ENCODE measurements at regions of chr9 and their contacts with region 1.

Region 1: GRCh38 chr9:36748322-36748899 is 175.7 kb downstream of the MELK start:
- DNase-seq: peak; percentile 54
- H3K4me3 Mint-ChIP-seq: no peak overlapping the region
- H3K27ac Mint-ChIP-seq: no peak overlapping the region
- H3K4me1 Mint-ChIP-seq: no peaks in the 10 kb centered on the region
- H3K27me3 Mint-ChIP-seq: peaks cover 90% of the 10 kb centered on the region
- CTCF ChIP-seq: no peak

Region 2: DNA sequence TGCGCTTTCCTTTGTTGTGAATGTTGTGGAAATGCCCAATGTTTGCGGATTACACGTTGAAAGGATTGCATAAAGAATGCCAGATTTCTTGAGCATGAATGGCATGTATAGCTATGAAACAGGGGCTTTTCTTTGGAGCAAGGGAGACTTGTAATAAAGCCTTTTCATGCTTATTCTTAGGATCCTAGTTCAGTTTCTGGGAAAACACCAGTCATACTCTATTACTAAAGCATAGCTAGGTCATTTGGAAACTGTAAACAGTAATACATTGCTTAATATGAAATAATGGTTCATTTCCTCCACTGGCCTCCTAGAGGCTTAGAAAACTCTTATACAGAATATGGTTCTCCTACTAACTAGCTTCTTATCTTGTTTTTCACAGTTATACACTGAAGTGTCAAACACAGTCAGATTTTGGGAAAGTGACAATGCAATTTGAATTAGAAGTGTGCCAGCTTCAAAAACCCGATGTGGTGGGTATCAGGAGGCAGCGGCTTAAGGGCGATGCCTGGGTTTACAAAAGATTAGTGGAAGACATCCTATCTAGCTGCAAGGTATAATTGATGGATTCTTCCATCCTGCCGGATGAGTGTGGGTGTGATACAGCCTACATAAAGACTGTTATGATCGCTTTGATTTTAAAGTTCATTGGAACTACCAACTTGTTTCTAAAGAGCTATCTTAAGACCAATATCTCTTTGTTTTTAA is 71.5 kb before region 1 on chr9:
- CTCF ChIA-PET with region 1: no interaction called
- POLR2A ChIA-PET with region 1: no interaction called
- intact Hi-C with region 1: no loop called
- DNase-seq: no peak
- H3K4me3 Mint-ChIP-seq: no peak overlapping the region
- H3K27ac Mint-ChIP-seq: no peak overlapping the region
- H3K4me1 Mint-ChIP-seq: no peaks in the 10 kb centered on the region
- H3K27me3 Mint-ChIP-seq: no peaks in the 10 kb centered on the region
- CTCF ChIP-seq: no peak

Region 3: DNA sequence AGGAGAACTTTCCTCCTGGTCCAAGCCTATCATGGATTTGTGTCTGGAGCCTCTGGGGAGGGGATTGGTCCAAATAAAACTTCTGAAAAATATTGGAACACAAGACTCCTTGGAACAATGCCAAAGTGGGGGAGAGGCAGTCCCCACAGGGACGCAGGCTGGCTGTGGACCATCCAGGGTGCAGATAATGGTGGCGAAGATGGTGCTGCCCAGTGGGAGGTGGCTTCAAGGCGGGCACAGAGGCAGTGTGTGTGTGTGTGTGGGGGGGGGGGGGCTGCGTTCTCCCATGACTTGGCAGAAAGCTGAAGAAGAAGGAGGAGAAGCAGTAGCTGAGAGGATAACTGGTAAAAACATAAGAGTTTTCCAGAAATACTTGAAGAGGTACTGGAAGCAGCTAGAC is 10.7 kb after region 1 on chr9:
- CTCF ChIA-PET with region 1: no interaction called
- POLR2A ChIA-PET with region 1: no interaction called
- intact Hi-C with region 1: no loop called
- DNase-seq: no peak
- H3K4me3 Mint-ChIP-seq: no peak overlapping the region
- H3K27ac Mint-ChIP-seq: no peak overlapping the region
- H3K4me1 Mint-ChIP-seq: no peaks in the 10 kb centered on the region
- H3K27me3 Mint-ChIP-seq: peaks cover 76% of the 10 kb centered on the region
- CTCF ChIP-seq: no peak

Region 4: GRCh38 chr9:36772450-36773403 is 24.3 kb after region 1 on chr9:
- CTCF ChIA-PET with region 1: no interaction called
- POLR2A ChIA-PET with region 1: no interaction called
- intact Hi-C with region 1: loop called (anchors 2 kb)
- DNase-seq: peak; percentile 46
- H3K4me3 Mint-ChIP-seq: no peak overlapping the region
- H3K27ac Mint-ChIP-seq: no peak overlapping the region
- H3K4me1 Mint-ChIP-seq: no peaks in the 10 kb centered on the region
- H3K27me3 Mint-ChIP-seq: peaks cover 90% of the 10 kb centered on the region
- CTCF ChIP-seq: no peak

Measured in MCF 10A (cell line).